CD4-positive, alpha-beta T cell (primary cell): ENCODE measurements at regions of chr3 and their contacts with region 1.

Region 1: DNA sequence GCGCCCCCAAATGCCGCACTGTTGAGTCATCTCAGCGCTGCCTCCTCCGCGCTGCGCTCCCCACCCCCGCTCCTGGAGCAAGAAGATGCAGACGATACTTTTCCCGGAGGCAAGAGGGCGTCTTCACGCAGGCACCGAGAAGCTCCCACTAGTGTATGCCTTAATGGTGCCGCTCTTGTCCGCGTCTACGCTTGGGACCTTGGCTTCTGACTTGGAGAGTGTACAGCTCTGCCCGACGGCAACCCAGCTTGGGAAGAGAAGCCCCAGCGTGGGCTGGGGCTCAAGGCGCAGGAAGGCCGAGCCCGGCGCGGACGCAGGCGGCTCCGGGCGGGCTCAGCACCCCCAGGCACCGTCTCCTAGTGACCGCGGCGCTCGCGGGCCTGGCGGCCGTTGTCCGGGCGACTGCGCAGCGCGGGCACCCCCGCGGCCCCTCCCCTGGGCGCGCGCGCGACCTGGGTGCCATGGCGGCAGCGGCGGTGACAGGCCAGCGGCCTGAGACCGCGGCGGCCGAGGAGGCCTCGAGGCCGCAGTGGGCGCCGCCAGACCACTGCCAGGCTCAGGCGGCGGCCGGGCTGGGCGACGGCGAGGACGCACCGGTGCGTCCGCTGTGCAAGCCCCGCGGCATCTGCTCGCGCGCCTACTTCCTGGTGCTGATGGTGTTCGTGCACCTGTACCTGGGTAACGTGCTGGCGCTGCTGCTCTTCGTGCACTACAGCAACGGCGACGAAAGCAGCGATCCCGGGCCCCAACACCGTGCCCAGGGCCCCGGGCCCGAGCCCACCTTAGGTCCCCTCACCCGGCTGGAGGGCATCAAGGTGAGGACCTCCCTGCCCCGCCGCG is at the start of gene P4HTM:
- DNase-seq: peak; percentile 45 to 88 (median 73)
- ATAC-seq: peak; percentile 60
- H3K4me3 ChIP-seq: peak within 1 kb of the TSS; percentile 81
- H3K4me3 Mint-ChIP-seq: peak within 1 kb of the TSS; percentile 96
- H3K27ac ChIP-seq: peak within 1 kb of the TSS; percentile 71 to 72
- H3K27ac Mint-ChIP-seq: peak within 1 kb of the TSS; percentile 94
- H3K4me1 ChIP-seq: peaks cover 48% of the 10 kb centered on the region
- H3K4me1 Mint-ChIP-seq: peaks cover 40% of the 10 kb centered on the region
- H3K27me3 ChIP-seq: no peaks in the 10 kb centered on the region
- H3K27me3 Mint-ChIP-seq: no peaks in the 10 kb centered on the region
- CTCF ChIP-seq: peak; percentile 39
- total RNA-seq, gene P4HTM: 45.9 to 47.0 TPM

Region 2: DNA sequence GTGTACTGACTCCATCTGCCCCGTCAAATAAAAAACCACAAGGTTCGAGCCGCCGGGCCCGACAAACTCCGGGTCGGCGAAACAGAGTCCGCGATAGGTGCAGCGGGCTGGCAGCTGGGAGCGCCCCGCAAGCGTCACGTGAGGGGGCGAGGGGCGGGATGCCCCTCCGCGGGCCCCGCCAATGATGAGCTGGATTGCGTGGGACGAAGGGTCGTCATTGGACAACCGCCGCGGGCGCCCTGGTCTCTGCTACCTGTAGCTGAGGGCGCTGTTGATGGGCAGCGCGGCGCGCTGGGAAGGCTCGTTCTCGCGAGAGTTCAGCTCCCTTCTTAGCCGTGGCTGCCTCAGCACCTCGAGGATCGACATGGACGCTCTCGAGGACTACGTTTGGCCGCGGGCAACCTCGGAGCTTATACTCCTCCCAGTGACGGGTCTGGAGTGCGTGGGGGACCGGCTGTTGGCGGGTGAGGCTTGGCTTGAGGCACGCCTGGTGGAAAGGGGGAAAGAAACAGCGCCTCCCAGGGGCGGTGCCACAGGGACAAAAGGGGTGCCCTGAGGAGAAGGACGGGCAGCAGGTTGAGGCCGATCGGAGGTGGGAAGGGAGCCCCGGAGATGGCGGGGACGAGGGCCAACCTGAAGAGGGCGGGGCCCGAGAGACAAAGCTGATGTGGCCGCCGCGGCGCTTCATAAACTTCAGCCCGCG is 17.2 kb after region 1 on chr3 and contains the start of gene WDR6:
- CTCF ChIA-PET with region 1: interaction called, 100 read pairs
- POLR2A ChIA-PET with region 1: interaction called, 146 read pairs
- intact Hi-C with region 1: loop called (anchors 1 to 2 kb)
- DNase-seq: peak; percentile 93 to 99 (median 96)
- ATAC-seq: peak; percentile 86
- H3K4me3 ChIP-seq: peak within 1 kb of the TSS; percentile 99
- H3K4me3 Mint-ChIP-seq: peak within 1 kb of the TSS; percentile 99
- H3K27ac ChIP-seq: peak within 1 kb of the TSS; percentile 89 to 99
- H3K27ac Mint-ChIP-seq: peak within 1 kb of the TSS; percentile 97
- H3K4me1 ChIP-seq: peaks cover 25% of the 10 kb centered on the region
- H3K4me1 Mint-ChIP-seq: peaks cover 27% of the 10 kb centered on the region
- H3K27me3 ChIP-seq: no peaks in the 10 kb centered on the region
- H3K27me3 Mint-ChIP-seq: no peaks in the 10 kb centered on the region
- CTCF ChIP-seq: peak; percentile 19
- total RNA-seq, gene WDR6: 132 to 134 TPM

Region 3: GRCh38 chr3:49021813-49022687 is 32.0 kb after region 1 on chr3 and contains the start of gene NDUFAF3:
- CTCF ChIA-PET with region 1: interaction called, 63 read pairs
- POLR2A ChIA-PET with region 1: interaction called, 86 read pairs
- intact Hi-C with region 1: loop called in 1 of 2 experiments (anchors 2 kb)
- DNase-seq: peak; percentile 81 to 95 (median 90)
- ATAC-seq: peak; percentile 74
- H3K4me3 ChIP-seq: peak within 1 kb of the TSS; percentile 80
- H3K4me3 Mint-ChIP-seq: peak within 1 kb of the TSS; percentile 95
- H3K27ac ChIP-seq: peak within 1 kb of the TSS; percentile 92 to 98
- H3K27ac Mint-ChIP-seq: peak within 1 kb of the TSS; percentile 90
- H3K4me1 ChIP-seq: peaks cover 63% of the 10 kb centered on the region
- H3K4me1 Mint-ChIP-seq: peaks cover 50% of the 10 kb centered on the region
- H3K27me3 ChIP-seq: no peaks in the 10 kb centered on the region
- H3K27me3 Mint-ChIP-seq: no peaks in the 10 kb centered on the region
- CTCF ChIP-seq: peak; percentile 99
- total RNA-seq, gene NDUFAF3: 52.7 to 53.2 TPM

Region 4: DNA sequence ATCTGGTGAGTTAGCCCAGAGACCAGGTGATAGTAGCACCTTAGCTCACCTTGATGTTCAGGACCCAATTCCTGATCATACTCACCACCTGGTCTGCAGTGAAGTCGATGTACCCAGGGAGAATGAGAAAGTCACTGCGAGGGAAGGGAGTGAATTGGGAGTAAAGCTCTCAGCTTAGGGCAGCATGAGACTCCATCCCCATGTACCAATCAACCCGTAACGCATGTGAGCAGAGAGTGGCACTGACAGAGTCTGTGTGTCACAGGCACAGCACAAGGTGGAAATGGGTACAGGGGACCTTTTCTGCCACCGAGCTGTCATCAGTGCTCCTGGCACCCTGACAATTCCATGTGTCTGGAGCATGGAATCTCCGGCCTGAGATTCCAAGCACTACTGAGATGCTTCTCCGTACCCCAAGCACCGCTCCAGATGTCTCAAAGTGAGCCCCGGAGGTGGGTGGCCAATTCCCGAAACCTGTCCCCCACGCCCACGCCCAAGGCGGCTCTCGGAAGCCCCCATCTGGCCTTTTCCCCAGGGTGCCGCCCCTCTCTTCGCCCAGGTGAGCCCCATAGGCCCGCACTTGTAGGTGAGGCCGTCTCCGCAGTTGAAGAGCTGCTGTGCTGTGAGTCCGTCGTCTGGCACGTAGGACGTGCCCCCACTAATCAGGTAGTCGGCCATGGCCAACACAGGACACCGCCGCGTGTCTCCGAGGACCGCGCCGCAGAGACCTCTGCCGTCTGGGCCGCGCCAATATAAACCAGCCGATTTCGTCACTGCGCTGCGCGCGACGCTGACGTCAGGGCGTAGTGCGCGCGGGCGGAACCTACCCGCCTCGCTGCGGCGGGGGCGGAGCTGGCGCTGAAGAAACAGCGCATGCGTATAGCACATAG is 38.9 kb after region 1 on chr3 and contains the start of gene IMPDH2:
- CTCF ChIA-PET with region 1: interaction called, 63 read pairs
- POLR2A ChIA-PET with region 1: interaction called, 43 read pairs
- intact Hi-C with region 1: loop called (anchors 2 kb)
- DNase-seq: peak; percentile 86 to 98 (median 92)
- ATAC-seq: peak; percentile 96
- H3K4me3 ChIP-seq: peak within 1 kb of the TSS; percentile 82
- H3K4me3 Mint-ChIP-seq: peak within 1 kb of the TSS; percentile 88
- H3K27ac ChIP-seq: peak within 1 kb of the TSS; percentile 87 to 94
- H3K27ac Mint-ChIP-seq: peak within 1 kb of the TSS; percentile 93
- H3K4me1 ChIP-seq: peaks cover 36% of the 10 kb centered on the region
- H3K4me1 Mint-ChIP-seq: peaks cover 31% of the 10 kb centered on the region
- H3K27me3 ChIP-seq: no peaks in the 10 kb centered on the region
- H3K27me3 Mint-ChIP-seq: no peaks in the 10 kb centered on the region
- CTCF ChIP-seq: no peak
- total RNA-seq, gene IMPDH2: 133 to 135 TPM

Region 5: GRCh38 chr3:49158108-49158709 is 168.2 kb after region 1 on chr3:
- CTCF ChIA-PET with region 1: interaction called, 10 read pairs
- POLR2A ChIA-PET with region 1: interaction called, 10 read pairs
- intact Hi-C with region 1: loop called (anchors 1 kb)
- DNase-seq: peak; percentile 48 to 83 (median 66)
- ATAC-seq: peak; percentile 98
- H3K4me3 ChIP-seq: no peak overlapping the region
- H3K4me3 Mint-ChIP-seq: peak overlapping the region; percentile 9
- H3K27ac ChIP-seq: peak overlapping the region in 1 of 2 donors; percentile 16
- H3K27ac Mint-ChIP-seq: peak overlapping the region; percentile 3
- H3K4me1 ChIP-seq: peaks cover under 1% of the 10 kb centered on the region
- H3K4me1 Mint-ChIP-seq: peaks cover 5% of the 10 kb centered on the region
- H3K27me3 ChIP-seq: no peaks in the 10 kb centered on the region
- H3K27me3 Mint-ChIP-seq: no peaks in the 10 kb centered on the region
- CTCF ChIP-seq: peak; percentile 63

Region 6: DNA sequence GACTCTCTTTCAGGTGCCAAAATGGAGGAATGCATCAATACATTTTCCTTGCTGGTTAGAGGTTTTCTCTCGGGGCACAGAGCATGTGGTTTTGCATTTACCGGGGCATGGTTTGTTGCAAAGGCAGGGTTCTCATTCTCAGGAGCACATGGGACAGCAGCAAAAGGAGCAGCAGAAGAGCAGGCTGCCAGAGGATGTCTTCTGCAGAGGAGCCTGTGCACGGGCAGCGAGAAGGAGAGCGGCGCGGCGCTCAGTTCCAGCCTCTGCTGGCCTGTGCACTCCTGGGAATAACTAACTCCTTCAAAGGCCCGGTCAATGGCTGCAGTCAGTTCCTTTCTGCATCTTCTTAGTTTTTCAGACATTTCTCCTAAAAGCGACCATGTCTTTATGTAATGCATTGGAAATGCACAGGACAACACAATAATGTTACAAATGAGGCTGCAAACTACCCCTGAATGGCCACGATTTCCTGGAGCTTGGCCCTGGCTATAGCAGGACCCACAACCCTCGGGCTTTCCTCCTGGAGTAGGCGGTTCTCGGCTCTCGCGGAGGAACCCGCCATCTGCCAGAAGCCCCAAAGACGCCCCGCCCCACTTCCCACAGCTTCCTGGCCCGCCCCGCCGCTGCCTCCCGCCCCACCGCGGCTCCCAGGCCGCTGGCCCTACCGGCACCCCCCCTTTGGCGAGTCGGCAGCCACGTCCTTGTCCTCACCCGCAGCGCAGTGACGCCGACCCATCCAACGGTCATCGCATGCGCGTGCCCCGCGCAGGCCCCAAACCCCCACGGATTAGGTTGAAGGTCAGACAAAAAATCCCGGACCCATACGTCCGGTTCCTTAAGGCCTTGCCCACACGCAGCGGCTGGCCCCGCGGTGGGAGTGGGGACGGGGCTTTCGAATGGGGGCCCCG is 286.7 kb after region 1 on chr3 and contains the start of gene C3orf62:
- CTCF ChIA-PET with region 1: no interaction called
- POLR2A ChIA-PET with region 1: no interaction called
- intact Hi-C with region 1: loop called in 1 of 2 experiments (anchors 10 kb)
- DNase-seq: peak; percentile 46 to 83 (median 66)
- ATAC-seq: peak; percentile 89
- H3K4me3 ChIP-seq: peak within 1 kb of the TSS; percentile 54
- H3K4me3 Mint-ChIP-seq: peak within 1 kb of the TSS; percentile 90
- H3K27ac ChIP-seq: peak within 1 kb of the TSS; percentile 66 to 85
- H3K27ac Mint-ChIP-seq: peak within 1 kb of the TSS; percentile 85
- H3K4me1 ChIP-seq: peaks cover 21% of the 10 kb centered on the region
- H3K4me1 Mint-ChIP-seq: peaks cover 27% of the 10 kb centered on the region
- H3K27me3 ChIP-seq: no peaks in the 10 kb centered on the region
- H3K27me3 Mint-ChIP-seq: no peaks in the 10 kb centered on the region
- CTCF ChIP-seq: no peak
- total RNA-seq, gene C3orf62: 7.0 to 7.5 TPM

Region 7: DNA sequence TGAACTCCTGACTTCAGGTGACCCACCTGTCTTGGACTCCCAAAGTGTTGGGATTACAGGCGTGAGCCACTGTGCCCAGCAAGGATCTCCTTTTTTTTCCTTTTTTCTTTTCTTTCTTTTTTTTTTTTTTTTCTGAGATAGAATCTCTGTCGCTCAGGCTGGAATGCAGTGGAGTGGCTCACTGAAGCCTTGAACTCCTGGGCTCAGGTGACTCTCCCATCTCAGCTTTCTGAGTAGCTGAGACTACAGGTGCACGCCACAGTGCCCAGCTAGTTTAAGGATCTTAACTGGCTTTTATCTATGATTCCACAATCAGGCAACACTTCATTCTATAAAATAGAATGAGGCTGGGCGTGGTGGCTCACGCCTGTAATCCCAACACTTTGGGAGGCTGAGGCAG is 455.4 kb after region 1 on chr3:
- CTCF ChIA-PET with region 1: no interaction called
- POLR2A ChIA-PET with region 1: no interaction called
- intact Hi-C with region 1: loop called in 1 of 2 experiments (anchors 10 kb)
- DNase-seq: no peak
- ATAC-seq: no peak
- H3K4me3 ChIP-seq: no peak overlapping the region
- H3K4me3 Mint-ChIP-seq: no peak overlapping the region
- H3K27ac ChIP-seq: no peak overlapping the region
- H3K27ac Mint-ChIP-seq: no peak overlapping the region
- H3K4me1 ChIP-seq: peaks cover 21% of the 10 kb centered on the region
- H3K4me1 Mint-ChIP-seq: peaks cover 14% of the 10 kb centered on the region
- H3K27me3 ChIP-seq: no peaks in the 10 kb centered on the region
- H3K27me3 Mint-ChIP-seq: no peaks in the 10 kb centered on the region
- CTCF ChIP-seq: no peak